ENCODE measurements at regions of chr10 and their contacts with region 1.

Region 1: DNA sequence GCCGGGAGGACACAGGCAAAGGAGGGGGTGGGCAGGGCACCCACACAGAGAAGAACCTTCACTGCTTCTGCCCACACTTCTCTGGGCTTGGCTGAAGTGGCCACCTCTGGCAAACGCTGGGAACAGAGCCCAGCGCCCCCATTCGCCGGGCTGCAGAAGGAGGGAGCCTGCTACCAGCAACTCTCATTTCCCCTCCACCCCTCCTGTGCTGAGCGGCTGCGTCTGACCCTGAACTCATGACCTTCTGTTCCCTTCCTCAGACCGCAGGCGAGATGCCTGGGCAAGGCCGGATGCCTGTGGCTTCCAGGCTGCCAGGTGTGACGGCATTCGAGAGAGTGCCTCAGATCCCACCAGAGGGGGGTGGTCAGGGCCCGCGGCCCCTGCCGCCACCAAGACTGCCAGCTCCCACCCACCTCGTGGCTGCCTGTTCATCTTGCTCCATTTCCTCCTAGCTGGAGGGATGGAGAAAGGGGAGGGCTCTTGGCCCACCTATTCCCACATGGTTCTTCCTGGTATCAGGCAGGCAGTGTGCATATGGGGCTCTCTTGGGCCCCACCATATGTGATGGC is 19.8 kb downstream of the DNAJB12 start:
- DNase-seq: peak; percentile 84
- H3K4me3 Mint-ChIP-seq: peak overlapping the region; percentile 70
- H3K27ac Mint-ChIP-seq: peak overlapping the region; percentile 91
- H3K4me1 Mint-ChIP-seq: peaks cover 72% of the 10 kb centered on the region
- H3K27me3 Mint-ChIP-seq: no peaks in the 10 kb centered on the region

Region 2: GRCh38 chr10:71957546-71958275 is 377.2 kb before region 1 on chr10:
- intact Hi-C with region 1: loop called (anchors 2 kb)
- DNase-seq: no peak
- H3K4me3 Mint-ChIP-seq: no peak overlapping the region
- H3K27ac Mint-ChIP-seq: no peak overlapping the region
- H3K4me1 Mint-ChIP-seq: no peaks in the 10 kb centered on the region
- H3K27me3 Mint-ChIP-seq: peaks cover 45% of the 10 kb centered on the region

Region 3: GRCh38 chr10:72162978-72163377 is 171.9 kb before region 1 on chr10:
- intact Hi-C with region 1: loop called (anchors 1 kb)
- DNase-seq: no peak
- H3K4me3 Mint-ChIP-seq: peak overlapping the region; percentile 57
- H3K27ac Mint-ChIP-seq: peak overlapping the region; percentile 80
- H3K4me1 Mint-ChIP-seq: peaks cover 27% of the 10 kb centered on the region
- H3K27me3 Mint-ChIP-seq: no peaks in the 10 kb centered on the region

Region 4: DNA sequence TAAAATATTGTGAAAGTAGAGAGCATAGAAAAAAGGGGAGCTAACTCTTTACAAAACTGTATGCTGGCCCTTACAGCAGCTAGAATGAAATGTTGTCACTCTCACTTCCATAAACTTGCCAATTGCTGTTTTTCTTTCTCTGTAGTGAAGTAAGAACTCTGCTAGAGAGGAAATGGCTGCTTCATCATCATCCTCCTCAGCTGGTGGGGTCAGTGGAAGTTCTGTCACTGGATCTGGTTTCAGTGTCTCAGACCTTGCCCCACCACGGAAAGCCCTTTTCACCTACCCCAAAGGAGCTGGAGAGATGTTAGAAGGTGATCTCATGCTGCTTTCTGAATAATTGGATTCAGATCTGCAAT is 111.2 kb before region 1 on chr10:
- intact Hi-C with region 1: loop called (anchors 1 kb)
- DNase-seq: no peak
- H3K4me3 Mint-ChIP-seq: no peak overlapping the region
- H3K27ac Mint-ChIP-seq: peak overlapping the region; percentile 12
- H3K4me1 Mint-ChIP-seq: peaks cover 44% of the 10 kb centered on the region
- H3K27me3 Mint-ChIP-seq: no peaks in the 10 kb centered on the region

Region 5: GRCh38 chr10:72260588-72261322 is 74.2 kb before region 1 on chr10:
- intact Hi-C with region 1: loop called (anchors 1 kb)
- DNase-seq: peak; percentile 81
- H3K4me3 Mint-ChIP-seq: peak overlapping the region; percentile 86
- H3K27ac Mint-ChIP-seq: peak overlapping the region; percentile 98
- H3K4me1 Mint-ChIP-seq: peaks cover 67% of the 10 kb centered on the region
- H3K27me3 Mint-ChIP-seq: no peaks in the 10 kb centered on the region

Region 6: DNA sequence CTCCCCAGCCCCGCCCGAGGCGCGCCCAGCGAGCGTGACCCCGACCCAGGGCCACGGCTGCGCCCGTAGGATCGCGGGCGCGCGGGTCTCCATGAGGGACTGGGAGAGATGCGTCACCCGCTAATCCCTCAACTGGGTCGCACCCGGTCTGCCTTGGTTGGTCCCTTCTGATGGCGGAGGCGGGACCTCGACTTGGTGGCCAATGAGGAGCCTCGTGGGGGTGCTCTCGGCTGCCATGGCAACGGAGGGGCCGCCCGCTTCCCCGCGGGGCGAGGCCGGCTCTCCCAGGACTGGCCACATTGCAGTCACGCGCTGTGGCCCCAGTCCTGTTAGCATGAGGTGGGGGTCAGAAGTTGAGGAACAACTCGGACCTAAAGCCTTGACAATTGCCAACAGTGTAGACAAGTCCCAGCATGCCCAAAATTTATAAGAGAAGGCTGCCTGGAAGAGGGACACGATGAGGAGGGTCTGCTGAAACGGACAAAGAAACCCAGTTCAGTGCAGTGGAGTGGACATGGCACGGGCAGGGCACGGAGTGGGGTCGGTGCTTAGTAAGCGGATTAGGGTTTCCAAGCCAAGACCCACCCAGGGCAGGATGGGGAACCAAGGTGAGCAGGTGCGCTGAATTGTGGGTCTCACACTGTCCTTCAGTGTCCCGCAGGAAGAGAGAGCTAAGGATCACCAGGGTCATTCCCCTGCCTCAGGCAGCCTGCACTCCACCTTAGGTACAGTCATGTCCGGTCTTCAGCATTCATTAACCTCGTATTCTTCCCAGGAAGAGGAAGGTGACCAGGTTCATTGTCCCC is 36.7 kb before region 1 on chr10:
- intact Hi-C with region 1: loop called (anchors 1 kb)
- DNase-seq: peak; percentile 92
- H3K4me3 Mint-ChIP-seq: peak overlapping the region; percentile 78
- H3K27ac Mint-ChIP-seq: peak overlapping the region; percentile 100
- H3K4me1 Mint-ChIP-seq: peaks cover 54% of the 10 kb centered on the region
- H3K27me3 Mint-ChIP-seq: no peaks in the 10 kb centered on the region

Region 7: DNA sequence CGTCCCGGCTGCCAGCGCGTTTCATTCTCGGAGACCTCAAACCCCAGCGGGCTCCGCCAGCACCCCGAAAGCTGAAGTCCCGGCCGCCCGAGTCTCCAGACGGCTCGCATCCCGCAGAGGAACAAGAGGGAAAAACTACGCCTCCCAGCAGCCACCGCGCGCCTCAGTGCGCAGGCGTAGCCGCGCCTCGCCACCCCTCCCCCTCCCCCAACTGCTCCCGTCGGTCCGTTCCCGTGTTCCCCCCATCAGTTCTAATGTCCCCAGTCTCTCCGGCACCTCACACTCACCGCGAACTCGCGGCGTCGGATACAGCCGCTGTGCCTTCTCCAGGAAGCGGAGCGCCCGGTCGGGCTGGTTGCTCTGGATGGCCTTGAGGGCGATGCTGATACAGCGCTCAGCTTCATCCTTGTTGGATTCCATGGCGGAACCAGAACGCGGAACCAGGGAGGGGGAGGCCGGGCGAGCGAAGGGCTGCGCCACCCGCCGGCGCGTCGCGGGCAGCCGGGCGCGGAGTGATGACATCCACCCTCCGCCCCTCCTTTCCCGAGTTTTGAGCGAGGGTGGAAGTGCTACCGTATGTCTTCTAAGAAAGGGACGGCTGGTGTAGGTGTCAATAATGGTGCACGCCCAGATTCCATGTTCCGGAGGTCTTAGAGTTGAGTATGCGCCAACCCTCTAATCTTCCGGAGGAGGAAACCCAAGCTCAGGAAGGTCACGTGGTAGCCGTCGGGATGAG is 19.7 kb after region 1 on chr10 and contains the start of gene DNAJB12:
- intact Hi-C with region 1: loop called (anchors 2 kb)
- DNase-seq: peak; percentile 86
- H3K4me3 Mint-ChIP-seq: peak within 1 kb of the TSS; percentile 97
- H3K27ac Mint-ChIP-seq: peak within 1 kb of the TSS; percentile 96
- H3K4me1 Mint-ChIP-seq: peaks cover 31% of the 10 kb centered on the region
- H3K27me3 Mint-ChIP-seq: peaks cover 2% of the 10 kb centered on the region
- total RNA-seq, gene DNAJB12: 32.4 and 38.0 TPM in 2 replicates

Region 8: GRCh38 chr10:72426986-72427385 is 92.1 kb after region 1 on chr10:
- intact Hi-C with region 1: no loop called
- DNase-seq: no peak
- H3K4me3 Mint-ChIP-seq: no peak overlapping the region
- H3K27ac Mint-ChIP-seq: no peak overlapping the region
- H3K4me1 Mint-ChIP-seq: no peaks in the 10 kb centered on the region
- H3K27me3 Mint-ChIP-seq: no peaks in the 10 kb centered on the region